Posterior vena cava (tissue), 2 donors: ENCODE measurements at regions of chr13 and their contacts with region 1.

Region 1: DNA sequence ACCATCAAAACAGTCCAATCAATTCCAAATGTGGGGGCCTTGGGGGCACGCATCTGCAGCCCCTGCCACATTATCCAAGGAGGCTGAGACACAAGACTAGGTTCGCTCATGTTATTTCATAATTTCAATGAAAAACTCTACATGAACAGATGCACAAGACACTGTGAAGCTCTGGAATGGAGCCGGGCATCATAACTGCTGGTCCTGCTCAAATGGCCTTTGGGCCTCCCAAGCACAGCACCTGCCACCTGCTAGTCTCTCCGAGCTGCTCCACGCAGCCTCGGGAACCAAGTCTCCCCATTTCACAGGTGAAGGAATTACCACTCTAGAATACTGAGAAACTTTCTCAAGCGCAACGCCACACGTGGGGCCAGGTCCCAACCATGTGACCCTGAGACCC is 16.9 kb downstream of the CARS2 start:
- DNase-seq: no peak

Region 2: GRCh38 chr13:110387391-110388107 is 301.5 kb before region 1 on chr13:
- intact Hi-C with region 1: no loop called
- DNase-seq: peak; percentile 79

Region 3: DNA sequence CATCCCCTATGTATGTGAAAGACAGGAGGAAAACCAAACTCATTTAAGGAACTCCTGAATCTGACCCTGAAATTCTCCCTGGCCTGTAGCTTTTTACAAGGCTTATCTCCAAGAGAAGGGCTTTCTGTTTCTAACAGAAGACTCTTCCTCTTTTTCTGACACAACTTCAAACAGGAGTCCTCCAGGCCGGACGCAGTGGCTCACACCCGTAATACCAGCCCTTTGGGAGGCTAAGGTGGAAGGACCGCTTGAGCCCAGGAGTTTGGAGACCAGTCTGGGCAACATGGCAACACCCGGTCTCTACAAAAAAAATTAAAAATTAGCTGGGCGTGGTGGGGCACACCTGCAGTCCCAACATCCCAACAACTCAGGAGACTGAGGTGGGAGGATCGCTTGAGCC is 25.0 kb before region 1 on chr13:
- intact Hi-C with region 1: loop called in 1 of 2 experiments (anchors 1 kb)
- DNase-seq: no peak